Endothelial cell of umbilical vein (primary cell): ENCODE measurements at regions of chr10 and their contacts with region 1.

Region 1: DNA sequence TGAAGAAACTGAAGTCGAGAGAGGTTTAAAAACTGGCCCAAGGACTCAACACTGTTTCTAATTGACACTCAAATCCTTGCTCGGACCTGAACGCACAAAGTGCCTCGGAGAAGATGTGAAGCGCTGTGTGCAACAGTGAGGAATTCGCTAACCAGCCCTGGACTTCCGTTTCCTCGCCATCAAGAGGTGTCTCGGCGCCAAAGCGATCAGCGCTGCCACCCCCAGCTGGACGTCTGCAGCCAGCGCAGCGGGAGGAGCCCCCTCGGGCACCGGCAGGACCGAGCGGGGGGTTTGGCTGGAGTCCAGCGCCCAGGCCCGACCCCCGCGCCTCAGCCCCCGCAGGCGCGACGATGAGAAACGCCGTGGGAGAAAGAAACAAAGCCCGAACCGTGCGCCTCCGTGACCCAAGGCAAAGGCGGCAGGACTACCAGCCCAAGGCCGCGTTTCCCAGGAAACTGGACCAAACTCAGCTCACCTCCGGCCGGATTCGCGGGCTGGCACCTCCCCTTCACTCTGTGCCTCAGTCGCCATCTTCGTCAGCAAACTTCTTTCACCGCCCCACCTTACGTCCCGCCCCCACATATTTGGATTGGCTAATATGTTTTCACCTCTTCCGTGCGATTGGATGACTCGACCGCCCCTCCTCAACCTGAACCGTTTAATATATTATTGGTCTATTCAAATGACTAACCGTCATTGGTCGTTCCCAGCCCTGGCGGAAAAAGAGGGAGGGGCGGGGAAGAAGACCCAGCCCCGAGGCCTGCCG is at the start of gene ARHGAP19:
- DNase-seq: peak; percentile 99
- H3K4me3 ChIP-seq: peak within 1 kb of the TSS; percentile 59 to 88 (median 65)
- H3K27ac ChIP-seq: peak within 1 kb of the TSS; percentile 85
- H3K4me1 ChIP-seq: no peaks in the 10 kb centered on the region
- H3K27me3 ChIP-seq: no peaks in the 10 kb centered on the region
- CTCF ChIP-seq: peak; percentile 17 to 33
- POLR2A ChIP-seq: peak; percentile 85
- total RNA-seq, gene ARHGAP19: 19.1 and 20.0 TPM in 2 replicates

Region 2: GRCh38 chr10:97318772-97319651 is 26.7 kb after region 1 on chr10 and contains the start of gene FRAT1:
- CTCF ChIA-PET with region 1: no interaction called
- POLR2A ChIA-PET with region 1: no interaction called
- dilution Hi-C with region 1: no loop called
- intact Hi-C with region 1: loop called (anchors 1 kb)
- DNase-seq: peak; percentile 93
- H3K4me3 ChIP-seq: peak within 1 kb of the TSS; percentile 39 to 74 (median 58)
- H3K27ac ChIP-seq: peak within 1 kb of the TSS; percentile 95
- H3K4me1 ChIP-seq: peaks cover 15% of the 10 kb centered on the region
- H3K27me3 ChIP-seq: no peaks in the 10 kb centered on the region
- CTCF ChIP-seq: no peak
- POLR2A ChIP-seq: peak; percentile 26
- total RNA-seq, gene FRAT1: 3.2 and 3.5 TPM in 2 replicates